A549 (cell line): ENCODE measurements at regions of chr14 and their contacts with region 1.

Region 1: GRCh38 chr14:53055003-53055402 is 98.1 kb downstream of the DDHD1 start:
- DNase-seq: peak; percentile 28 to 55
- ATAC-seq: peak; percentile 77 to 85; a peak in 4 of 6 replicates
- H3K4me3 ChIP-seq: no peak overlapping the region
- H3K27ac ChIP-seq: no peak overlapping the region
- H3K4me1 ChIP-seq: no peaks in the 10 kb centered on the region
- CTCF ChIP-seq: peak; percentile 83
- EP300 ChIP-seq: no peak
- POLR2A ChIP-seq: no peak
- RAD21 ChIP-seq: peak; percentile 78 to 80

Region 2: GRCh38 chr14:52923902-52924575 is 131.0 kb before region 1 on chr14:
- CTCF ChIA-PET with region 1: interaction called, 13 read pairs
- POLR2A ChIA-PET with region 1: no interaction called
- DNase-seq: peak in 1 of 2 experiments; percentile 33
- ATAC-seq: peak; percentile 72 to 78
- H3K4me3 ChIP-seq: no peak overlapping the region
- H3K27ac ChIP-seq: peak overlapping the region in 1 of 2 experiments; percentile 11; a peak in 1 of 6 replicates
- H3K4me1 ChIP-seq: peaks cover 89% of the 10 kb centered on the region
- CTCF ChIP-seq: peak; percentile 35
- EP300 ChIP-seq: no peak
- POLR2A ChIP-seq: no peak
- RAD21 ChIP-seq: peak; percentile 44; a peak in 3 of 5 replicates

Region 3: GRCh38 chr14:52961060-52961639 is 93.9 kb before region 1 on chr14:
- CTCF ChIA-PET with region 1: interaction called, 11 read pairs
- POLR2A ChIA-PET with region 1: no interaction called
- DNase-seq: peak; percentile 73 to 80
- ATAC-seq: peak; percentile 81 to 96
- H3K4me3 ChIP-seq: no peak overlapping the region
- H3K27ac ChIP-seq: no peak overlapping the region; a peak in 1 of 6 replicates
- H3K4me1 ChIP-seq: no peaks in the 10 kb centered on the region
- CTCF ChIP-seq: peak; percentile 65
- EP300 ChIP-seq: no peak
- POLR2A ChIP-seq: no peak
- RAD21 ChIP-seq: peak; percentile 85 to 94

Region 4: GRCh38 chr14:53044486-53044885 is 10.5 kb before region 1 on chr14:
- CTCF ChIA-PET with region 1: interaction called, 31 read pairs
- POLR2A ChIA-PET with region 1: no interaction called
- DNase-seq: no peak
- ATAC-seq: no peak
- H3K4me3 ChIP-seq: no peak overlapping the region
- H3K27ac ChIP-seq: no peak overlapping the region
- H3K4me1 ChIP-seq: no peaks in the 10 kb centered on the region
- CTCF ChIP-seq: no peak
- EP300 ChIP-seq: no peak
- POLR2A ChIP-seq: no peak
- RAD21 ChIP-seq: no peak